H1 (cell line): ENCODE measurements at regions of chr7 and their contacts with region 1.

Region 1: DNA sequence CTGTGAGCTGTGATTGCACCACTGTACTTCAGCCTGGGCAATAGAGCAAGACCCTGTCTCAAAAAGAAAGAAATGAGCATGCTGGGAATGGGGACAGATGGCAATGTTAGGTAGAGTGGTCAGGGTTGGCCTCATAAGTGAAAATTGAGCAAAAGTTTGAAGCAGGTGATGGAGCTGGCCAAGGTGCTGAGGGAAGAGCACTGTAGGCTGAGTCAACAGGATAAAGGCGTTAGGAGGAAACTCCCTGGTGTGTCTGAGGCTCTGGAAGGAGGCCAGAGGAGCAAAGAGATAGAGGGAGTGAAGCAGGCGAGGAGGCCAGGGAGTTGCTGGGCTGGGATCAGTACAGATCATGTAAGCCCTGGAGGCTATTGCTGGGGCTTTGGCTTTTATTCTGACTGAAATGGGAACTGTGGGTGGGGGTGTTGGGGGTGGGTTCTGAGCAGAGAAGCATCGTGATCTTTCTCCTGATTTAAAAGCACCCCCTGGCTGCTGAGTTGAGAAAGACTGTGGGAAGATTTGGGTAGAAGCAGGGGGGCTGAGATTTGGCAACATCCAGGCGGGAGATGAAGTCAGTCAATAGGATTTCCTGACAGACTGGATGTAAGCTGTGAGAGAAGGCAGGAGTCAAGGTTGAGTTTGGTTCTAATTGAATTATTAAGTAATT is 52.5 kb upstream of the VKORC1L1 start:
- DNase-seq: peak in 1 of 2 experiments; percentile 34
- H3K4me3 ChIP-seq: no peak overlapping the region
- H3K27ac ChIP-seq: no peak overlapping the region
- H3K4me1 ChIP-seq: no peaks in the 10 kb centered on the region
- H3K27me3 ChIP-seq: no peaks in the 10 kb centered on the region
- CTCF ChIP-seq: peak; percentile 5 to 58 (median 49)
- EP300 ChIP-seq: no peak
- POLR2A ChIP-seq: no peak
- RAD21 ChIP-seq: peak; percentile 51 to 64

Region 2: DNA sequence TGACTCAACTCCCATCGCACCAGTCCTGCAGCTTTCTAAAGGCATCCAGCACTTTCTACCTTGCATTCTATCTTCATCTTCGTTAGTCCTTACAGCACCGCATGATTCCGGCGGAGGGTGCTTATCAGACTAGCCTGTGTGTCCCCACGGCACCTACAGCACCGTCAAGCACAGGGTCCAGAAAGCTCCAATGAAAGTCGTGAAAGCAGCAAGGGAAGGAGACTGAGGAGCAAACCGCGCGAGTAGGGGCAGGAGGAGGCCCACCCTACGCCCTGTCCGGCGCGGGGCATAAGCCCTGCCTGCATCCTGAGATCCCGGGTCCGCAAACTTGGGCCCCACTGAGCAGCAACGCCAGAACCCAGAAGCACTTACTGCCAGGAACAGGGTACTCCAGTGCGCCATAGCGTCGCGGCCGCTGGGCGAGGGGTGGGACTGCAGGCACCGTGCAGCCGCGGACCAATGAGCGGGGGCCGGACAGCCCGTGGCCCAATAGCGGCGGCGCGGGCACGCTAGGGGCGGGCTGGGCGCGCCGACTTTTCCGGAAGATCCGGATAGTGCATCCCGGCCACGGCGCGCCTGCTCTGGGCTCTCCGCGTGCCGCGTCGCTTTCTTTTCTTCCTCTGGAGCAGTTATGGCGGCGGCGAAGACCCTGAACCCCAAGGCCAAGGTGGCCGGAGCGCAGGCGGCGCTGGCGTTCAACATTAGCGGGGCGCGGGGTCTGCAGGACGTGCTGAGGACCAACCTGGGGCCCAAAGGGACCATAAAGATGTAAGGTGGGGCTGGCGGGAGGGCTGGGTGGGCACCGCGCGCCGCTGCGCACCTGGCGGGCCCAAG is 69.7 kb before region 1 on chr7:
- CTCF ChIA-PET with region 1: no interaction called
- POLR2A ChIA-PET with region 1: no interaction called
- DNase-seq: peak; percentile 68 to 91
- H3K4me3 ChIP-seq: peak overlapping the region; percentile 79 to 97 (median 95)
- H3K27ac ChIP-seq: peak overlapping the region; percentile 95
- H3K4me1 ChIP-seq: peaks cover 0 to 2% (median 0%) of the 10 kb centered on the region in 4 experiments; a peak in 1 of 7 replicates
- H3K27me3 ChIP-seq: no peaks in the 10 kb centered on the region
- CTCF ChIP-seq: no peak
- EP300 ChIP-seq: no peak
- POLR2A ChIP-seq: peak in 1 of 2 experiments; percentile 91; a peak in 2 of 3 replicates
- RAD21 ChIP-seq: no peak

Region 3: DNA sequence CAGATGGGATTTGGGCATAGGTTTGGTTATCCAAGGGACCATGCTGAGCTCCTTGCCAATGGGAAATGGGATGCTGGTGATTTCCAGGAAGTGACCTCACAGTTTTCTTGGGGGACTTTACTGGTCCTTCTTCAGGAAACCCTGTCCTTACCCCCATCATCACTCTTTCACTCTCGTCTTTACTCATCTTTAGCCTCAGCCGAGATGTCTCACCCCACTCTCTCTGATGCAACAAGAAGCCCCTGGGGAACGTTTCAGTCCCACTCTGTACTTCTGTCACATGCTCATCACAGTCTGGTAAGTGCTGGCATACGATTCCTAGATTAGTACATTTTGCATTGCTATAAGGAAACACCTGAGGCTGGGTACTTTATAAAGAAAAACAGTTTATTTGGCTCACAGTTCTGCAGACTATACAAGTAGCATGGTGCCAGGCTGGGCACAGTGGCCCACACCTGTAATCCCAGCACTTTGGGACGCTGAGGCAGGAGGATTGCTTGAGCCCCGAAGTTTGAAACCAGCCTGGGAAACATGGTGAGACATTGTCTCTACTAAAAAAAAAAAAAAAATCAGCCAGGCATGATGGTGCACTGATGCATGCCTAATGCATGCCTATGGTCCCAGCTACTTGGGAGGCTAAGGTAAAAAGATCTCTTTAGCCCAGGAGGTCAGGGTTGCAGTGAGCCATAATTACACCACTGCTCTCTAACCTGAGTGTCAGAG is 11.0 kb before region 1 on chr7:
- CTCF ChIA-PET with region 1: interaction called, 14 read pairs
- POLR2A ChIA-PET with region 1: no interaction called
- DNase-seq: no peak
- H3K4me3 ChIP-seq: no peak overlapping the region
- H3K27ac ChIP-seq: no peak overlapping the region
- H3K4me1 ChIP-seq: no peaks in the 10 kb centered on the region
- H3K27me3 ChIP-seq: no peaks in the 10 kb centered on the region
- CTCF ChIP-seq: no peak
- EP300 ChIP-seq: no peak
- POLR2A ChIP-seq: no peak
- RAD21 ChIP-seq: no peak